Right cardiac atrium (tissue), 5 donors: ENCODE measurements at regions of chr17 and their contacts with region 1.

Region 1: GRCh38 chr17:73365906-73366623 is 54.3 kb upstream of the CDC42EP4 start:
- DNase-seq: peak in 2 of 3 donors; percentile 64 to 79
- ATAC-seq: peak; percentile 57 to 69
- H3K4me3 ChIP-seq: no peak overlapping the region
- H3K27ac ChIP-seq: peak overlapping the region; percentile 43
- H3K4me1 ChIP-seq: no peaks in the 10 kb centered on the region
- H3K27me3 ChIP-seq: no peaks in the 10 kb centered on the region

Region 2: DNA sequence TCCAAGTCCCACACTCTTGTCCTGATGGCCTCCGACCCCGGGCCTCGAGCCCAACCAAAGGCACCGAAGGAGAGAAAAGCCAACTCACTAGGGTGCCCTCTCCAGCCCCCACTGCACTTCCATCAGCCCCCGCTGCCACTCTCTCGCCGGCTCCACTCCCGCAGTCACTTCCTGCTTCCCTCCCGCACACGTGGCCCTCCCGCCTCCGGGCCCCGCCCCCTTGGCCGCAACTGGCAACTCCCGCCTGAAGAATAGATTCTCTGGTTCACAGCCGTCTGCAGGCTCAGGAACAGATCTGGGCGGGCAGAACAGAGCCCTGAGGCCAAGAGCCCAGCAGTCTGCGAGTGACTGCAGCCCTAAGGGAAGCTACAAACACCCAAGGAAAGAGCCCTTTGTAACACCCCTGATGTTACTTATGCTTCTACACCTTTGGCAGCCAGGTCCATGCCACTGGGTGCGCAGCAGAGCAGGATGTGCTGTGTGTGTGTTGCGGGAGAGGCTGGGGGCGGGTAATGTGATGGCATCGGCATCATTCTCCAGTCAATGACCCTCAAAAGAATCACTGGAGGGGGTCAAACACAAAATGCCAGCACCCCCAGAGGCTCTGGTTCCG is 273.4 kb before region 1 on chr17 and contains the start of gene SLC39A11:
- intact Hi-C with region 1: no loop called
- DNase-seq: peak; percentile 94 to 98 (median 97)
- ATAC-seq: peak; percentile 98 to 99
- H3K4me3 ChIP-seq: peak within 1 kb of the TSS; percentile 82
- H3K27ac ChIP-seq: peak within 1 kb of the TSS; percentile 75
- H3K4me1 ChIP-seq: peaks cover 3% of the 10 kb centered on the region
- H3K27me3 ChIP-seq: no peaks in the 10 kb centered on the region
- total RNA-seq, gene SLC39A11: 9.8 to 12.6 (median 9.9) TPM

Region 3: GRCh38 chr17:73304971-73305812 is 60.9 kb before region 1 on chr17:
- intact Hi-C with region 1: loop called (anchors 5 to 10 kb)
- DNase-seq: peak; percentile 87 to 88 (median 87)
- ATAC-seq: peak; percentile 73 to 86
- H3K4me3 ChIP-seq: peak overlapping the region; percentile 7
- H3K27ac ChIP-seq: peak overlapping the region; percentile 94
- H3K4me1 ChIP-seq: peaks cover 21% of the 10 kb centered on the region
- H3K27me3 ChIP-seq: no peaks in the 10 kb centered on the region

Region 4: DNA sequence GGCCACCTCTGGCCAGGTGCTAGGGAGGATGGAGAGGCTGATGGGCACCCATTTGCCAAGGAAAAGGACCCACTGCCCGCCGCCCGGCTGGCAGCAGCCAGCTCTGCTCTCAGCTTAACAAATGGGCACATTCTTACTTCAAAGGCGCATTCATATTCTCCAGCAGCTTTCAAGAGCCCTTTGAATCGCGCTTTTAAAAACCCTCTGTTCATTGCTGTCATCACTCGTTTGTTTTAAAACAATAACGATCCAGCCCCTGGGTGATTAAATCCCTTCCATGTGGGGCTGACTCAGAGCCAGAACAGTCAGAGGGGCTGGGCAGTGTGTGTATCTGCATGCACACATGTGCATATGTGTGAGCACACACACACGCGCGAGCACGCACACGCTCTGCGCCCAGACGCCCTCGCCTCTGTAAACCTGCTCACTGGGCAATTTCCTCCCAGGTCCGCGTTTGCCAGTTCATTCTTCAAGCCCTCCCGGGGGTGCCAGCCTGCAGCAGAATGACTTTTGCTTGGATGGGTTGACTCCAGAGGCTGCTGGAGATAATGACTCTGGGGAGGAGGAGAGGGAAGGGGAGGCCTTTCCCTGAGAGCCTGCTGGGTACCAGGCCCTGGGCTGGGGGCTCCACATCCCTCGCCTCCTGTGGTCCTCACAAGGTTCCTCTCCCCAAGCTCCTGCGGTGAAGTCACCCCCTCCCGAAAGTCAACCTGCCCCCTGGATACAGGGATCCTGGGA is 145.1 kb after region 1 on chr17:
- intact Hi-C with region 1: no loop called
- DNase-seq: peak in 1 of 3 donors; percentile 11
- ATAC-seq: no peak
- H3K4me3 ChIP-seq: no peak overlapping the region
- H3K27ac ChIP-seq: no peak overlapping the region
- H3K4me1 ChIP-seq: no peaks in the 10 kb centered on the region
- H3K27me3 ChIP-seq: no peaks in the 10 kb centered on the region